Prostate gland (tissue), 2 donors: ENCODE measurements at regions of chr2 and their contacts with region 1.

Region 1: DNA sequence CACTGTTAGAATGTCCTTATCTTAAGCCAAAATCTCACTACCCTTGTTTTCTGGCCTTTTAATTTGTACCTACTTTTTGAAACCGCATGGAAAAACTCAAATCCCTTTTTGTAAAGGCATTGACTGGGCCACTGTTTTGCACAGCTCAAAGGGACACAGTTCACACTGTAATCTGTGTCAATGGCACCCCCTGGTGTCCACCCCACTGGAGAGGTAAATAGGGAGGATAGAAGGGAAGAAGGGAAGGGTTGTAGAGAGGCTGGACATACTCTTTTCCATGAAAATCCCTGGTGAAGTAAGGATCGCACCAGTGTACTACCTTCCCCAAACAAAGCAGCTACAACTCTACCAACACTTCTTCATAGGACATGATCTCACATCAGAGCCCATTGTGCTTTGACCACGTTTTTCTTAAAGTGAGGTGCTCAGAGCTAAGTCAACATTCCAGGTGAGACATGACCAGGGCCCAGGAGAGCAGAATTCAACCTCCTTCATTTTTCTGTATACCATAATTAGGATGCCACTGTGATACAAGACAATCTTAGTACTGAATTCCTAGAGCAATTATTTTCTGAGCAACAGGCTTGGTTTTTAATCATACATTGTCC is 92.4 kb upstream of the RMDN2 start:
- DNase-seq: peak; percentile 90
- H3K4me3 ChIP-seq: no peak overlapping the region
- H3K27ac ChIP-seq: peak overlapping the region in 1 of 2 donors; percentile 21
- H3K4me1 ChIP-seq: no peaks in the 10 kb centered on the region
- H3K27me3 ChIP-seq: no peaks in the 10 kb centered on the region
- CTCF ChIP-seq: peak; percentile 54 to 94 (median 86)
- POLR2A ChIP-seq: no peak

Region 2: DNA sequence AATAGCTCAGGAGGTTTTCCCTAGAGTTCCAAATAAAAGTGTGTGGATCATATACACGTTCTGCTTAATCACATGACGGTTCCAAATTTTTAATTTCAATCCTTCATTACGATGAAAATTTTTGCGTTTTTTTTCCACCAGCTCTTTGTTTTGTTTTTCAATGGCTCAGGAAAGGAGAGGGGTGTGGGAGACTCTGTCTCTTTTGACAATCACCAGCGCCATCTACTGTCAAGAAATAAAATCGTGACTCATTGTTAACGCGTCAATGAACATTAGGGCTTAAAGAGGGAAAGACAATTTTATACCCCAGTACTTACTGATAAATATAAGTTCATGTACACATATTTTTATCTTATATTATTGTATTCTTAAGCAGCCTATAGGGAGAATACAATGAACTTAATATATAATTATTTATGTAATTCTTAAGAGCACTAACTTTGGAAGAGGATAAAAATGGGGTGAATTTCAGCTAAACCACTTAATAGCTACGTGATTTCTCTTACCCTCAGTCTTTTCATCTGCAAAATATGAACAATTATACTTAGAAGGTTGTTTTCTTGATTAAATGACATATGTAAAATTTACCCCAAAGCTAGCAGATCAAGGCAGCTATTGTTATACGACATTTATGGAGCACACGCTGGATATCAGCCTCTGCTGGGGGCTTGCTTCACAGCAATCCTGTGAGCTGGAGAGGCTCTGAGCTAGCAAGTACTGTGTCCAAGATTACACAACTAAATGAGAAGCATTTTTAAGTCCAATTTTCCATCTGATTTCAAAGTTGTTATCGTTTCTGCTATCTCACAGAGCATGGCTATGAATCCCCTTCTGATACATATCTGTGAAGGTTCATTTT is 45.0 kb after region 1 on chr2:
- intact Hi-C with region 1: loop called (anchors 2 kb)
- DNase-seq: peak; percentile 43
- H3K4me3 ChIP-seq: no peak overlapping the region
- H3K27ac ChIP-seq: no peak overlapping the region
- H3K4me1 ChIP-seq: no peaks in the 10 kb centered on the region
- H3K27me3 ChIP-seq: no peaks in the 10 kb centered on the region
- CTCF ChIP-seq: peak; percentile 47 to 83 (median 80)
- POLR2A ChIP-seq: no peak